ENCODE measurements at regions of chr18 and their contacts with region 1.

Region 1: DNA sequence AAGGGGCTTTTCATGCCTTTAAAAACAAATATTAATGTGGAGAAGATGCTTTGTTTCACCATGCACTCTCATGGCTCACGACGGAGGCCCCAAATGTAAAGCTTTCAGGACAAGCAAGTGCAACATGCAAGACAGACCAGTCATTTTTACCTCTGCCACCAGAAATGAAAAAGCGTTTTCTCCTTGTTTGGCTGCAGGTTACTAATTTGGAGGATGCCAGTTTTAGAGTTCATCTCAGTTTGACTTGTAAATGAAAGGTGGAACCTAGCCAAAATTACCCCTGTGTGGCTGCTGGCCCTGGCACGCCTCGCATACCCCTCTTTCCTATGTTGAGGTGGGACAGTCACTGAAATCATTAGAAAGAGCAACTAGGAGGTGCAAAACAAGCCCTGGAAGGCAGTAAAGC is 138.6 kb downstream of the BCL2 start:
- DNase-seq: no peak
- ATAC-seq: peak; percentile 5
- H3K4me3 Mint-ChIP-seq: peak overlapping the region; percentile 72
- H3K27ac Mint-ChIP-seq: peak overlapping the region; percentile 82
- H3K4me1 Mint-ChIP-seq: peaks cover 94% of the 10 kb centered on the region
- H3K27me3 Mint-ChIP-seq: no peaks in the 10 kb centered on the region
- CTCF ChIP-seq: no peak

Region 2: DNA sequence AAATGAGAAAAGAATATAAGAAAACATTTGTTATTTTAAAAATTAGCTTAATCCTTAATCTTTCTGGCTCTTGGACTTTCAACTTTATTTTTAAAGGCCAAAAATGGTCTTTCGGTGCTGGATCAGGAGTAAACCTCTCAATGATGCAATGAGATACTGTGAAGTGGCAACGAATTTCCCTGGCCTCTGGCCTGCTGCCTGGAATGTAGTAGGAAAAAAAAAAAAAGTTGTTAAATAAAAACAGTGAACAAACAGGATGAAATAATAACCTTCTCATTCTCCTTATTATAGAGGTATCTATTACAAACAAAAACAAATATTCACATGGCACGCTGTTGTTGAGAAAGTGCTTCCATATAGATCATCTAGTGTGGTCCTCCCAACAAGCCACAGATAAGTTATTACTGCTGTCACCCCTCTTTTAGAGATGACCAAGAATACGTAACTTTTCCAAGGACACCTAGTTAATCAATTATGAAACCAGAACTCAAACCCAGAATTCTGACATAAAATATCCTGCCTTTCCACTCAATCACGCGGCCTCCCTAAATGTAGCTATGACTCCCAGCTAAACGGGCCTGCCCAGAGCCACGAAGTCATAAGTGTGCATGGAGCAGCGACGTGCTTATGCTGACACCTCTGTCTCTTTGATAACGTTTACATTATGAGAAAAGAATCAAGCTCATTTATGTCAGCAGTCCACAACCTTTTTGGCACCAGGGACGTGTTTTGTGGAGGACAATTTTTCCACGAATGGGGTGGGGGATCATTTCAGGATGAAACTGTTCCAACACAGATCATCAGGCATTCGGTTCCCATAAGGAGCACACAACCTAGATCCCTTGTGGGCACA is 32.3 kb before region 1 on chr18:
- CTCF ChIA-PET with region 1: no interaction called
- POLR2A ChIA-PET with region 1: no interaction called
- intact Hi-C with region 1: no loop called
- DNase-seq: no peak
- ATAC-seq: no peak
- H3K4me3 Mint-ChIP-seq: no peak overlapping the region
- H3K27ac Mint-ChIP-seq: peak overlapping the region; percentile 41
- H3K4me1 Mint-ChIP-seq: peaks cover 81% of the 10 kb centered on the region
- H3K27me3 Mint-ChIP-seq: no peaks in the 10 kb centered on the region
- CTCF ChIP-seq: no peak

Region 3: GRCh38 chr18:63168287-63168686 is 12.7 kb before region 1 on chr18:
- CTCF ChIA-PET with region 1: interaction called, 4 read pairs
- POLR2A ChIA-PET with region 1: interaction called, 52 read pairs
- intact Hi-C with region 1: loop called (anchors 1 kb)
- DNase-seq: no peak
- ATAC-seq: no peak
- H3K4me3 Mint-ChIP-seq: no peak overlapping the region
- H3K27ac Mint-ChIP-seq: peak overlapping the region; percentile 35
- H3K4me1 Mint-ChIP-seq: peaks cover 54% of the 10 kb centered on the region
- H3K27me3 Mint-ChIP-seq: no peaks in the 10 kb centered on the region
- CTCF ChIP-seq: no peak

Region 4: DNA sequence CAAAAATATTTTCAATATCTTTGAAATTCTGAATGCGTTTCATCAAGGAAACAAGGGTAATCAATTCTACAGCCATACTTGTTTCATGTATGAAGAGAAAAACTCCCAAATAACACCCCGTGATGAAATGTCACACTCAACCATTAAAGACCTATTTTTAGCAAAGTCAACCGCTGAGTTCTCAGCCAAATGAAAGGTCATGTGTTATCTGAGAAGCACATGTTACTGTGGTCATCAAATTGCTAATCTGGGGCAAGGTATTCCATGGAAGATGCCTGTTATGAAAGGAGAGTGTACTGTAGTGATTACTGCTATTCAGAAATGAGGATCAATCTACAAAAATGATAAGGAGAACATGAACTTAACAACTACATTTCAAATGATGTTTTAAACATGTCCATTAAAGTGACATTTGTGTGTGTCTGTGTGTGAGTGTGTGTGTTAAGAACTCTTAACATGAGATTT is 11.9 kb after region 1 on chr18:
- CTCF ChIA-PET with region 1: interaction called, 4 read pairs
- POLR2A ChIA-PET with region 1: no interaction called
- intact Hi-C with region 1: loop called (anchors 1 kb)
- DNase-seq: no peak
- ATAC-seq: peak; percentile 37
- H3K4me3 Mint-ChIP-seq: peak overlapping the region; percentile 26
- H3K27ac Mint-ChIP-seq: peak overlapping the region; percentile 74
- H3K4me1 Mint-ChIP-seq: peaks cover 61% of the 10 kb centered on the region
- H3K27me3 Mint-ChIP-seq: no peaks in the 10 kb centered on the region
- CTCF ChIP-seq: no peak